AG04449 (cell line): ENCODE measurements at regions of chr12 and their contacts with region 1.

Region 1: DNA sequence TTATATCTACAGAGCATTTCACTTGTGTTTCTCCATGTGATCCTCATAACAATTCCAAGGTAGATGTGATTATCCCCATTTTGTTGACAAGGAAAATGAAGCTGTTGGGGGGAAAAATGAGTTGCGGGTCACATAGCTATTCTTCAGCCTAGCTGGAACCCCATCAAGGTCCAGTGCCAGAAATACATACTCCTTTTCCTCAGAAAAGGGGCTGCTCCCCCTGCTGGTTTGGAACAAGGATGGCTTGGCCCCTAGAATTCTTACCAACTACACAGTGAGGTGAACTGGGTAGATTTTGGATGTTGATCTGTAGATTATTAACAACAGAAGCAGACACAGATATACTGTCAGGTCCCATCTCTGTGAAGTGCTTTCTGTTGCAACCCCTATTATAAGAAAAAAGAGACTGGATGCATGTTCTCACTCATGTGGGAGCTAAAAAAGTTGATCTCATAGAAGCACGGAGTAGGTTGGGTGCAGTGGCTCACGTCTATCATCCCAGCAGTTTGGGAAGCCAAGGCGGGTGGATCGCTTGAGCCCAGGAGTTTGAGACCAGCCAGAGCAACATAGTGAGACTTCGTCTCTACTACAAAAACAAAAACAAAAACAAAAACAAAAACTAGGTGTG is 8.9 kb downstream of the IKZF4 start:
- DNase-seq: no peak
- H3K4me3 ChIP-seq: no peak overlapping the region
- CTCF ChIP-seq: peak; percentile 82

Region 2: GRCh38 chr12:55982319-55982936 is 47.4 kb before region 1 on chr12:
- CTCF ChIA-PET with region 1: interaction called, 15 read pairs
- POLR2A ChIA-PET with region 1: no interaction called
- DNase-seq: no peak
- H3K4me3 ChIP-seq: no peak overlapping the region
- CTCF ChIP-seq: no peak

Region 3: GRCh38 chr12:56007564-56008559 is 21.9 kb before region 1 on chr12:
- CTCF ChIA-PET with region 1: interaction called, 103 read pairs
- POLR2A ChIA-PET with region 1: no interaction called
- DNase-seq: no peak
- H3K4me3 ChIP-seq: peak overlapping the region; percentile 69
- CTCF ChIP-seq: no peak

Region 4: DNA sequence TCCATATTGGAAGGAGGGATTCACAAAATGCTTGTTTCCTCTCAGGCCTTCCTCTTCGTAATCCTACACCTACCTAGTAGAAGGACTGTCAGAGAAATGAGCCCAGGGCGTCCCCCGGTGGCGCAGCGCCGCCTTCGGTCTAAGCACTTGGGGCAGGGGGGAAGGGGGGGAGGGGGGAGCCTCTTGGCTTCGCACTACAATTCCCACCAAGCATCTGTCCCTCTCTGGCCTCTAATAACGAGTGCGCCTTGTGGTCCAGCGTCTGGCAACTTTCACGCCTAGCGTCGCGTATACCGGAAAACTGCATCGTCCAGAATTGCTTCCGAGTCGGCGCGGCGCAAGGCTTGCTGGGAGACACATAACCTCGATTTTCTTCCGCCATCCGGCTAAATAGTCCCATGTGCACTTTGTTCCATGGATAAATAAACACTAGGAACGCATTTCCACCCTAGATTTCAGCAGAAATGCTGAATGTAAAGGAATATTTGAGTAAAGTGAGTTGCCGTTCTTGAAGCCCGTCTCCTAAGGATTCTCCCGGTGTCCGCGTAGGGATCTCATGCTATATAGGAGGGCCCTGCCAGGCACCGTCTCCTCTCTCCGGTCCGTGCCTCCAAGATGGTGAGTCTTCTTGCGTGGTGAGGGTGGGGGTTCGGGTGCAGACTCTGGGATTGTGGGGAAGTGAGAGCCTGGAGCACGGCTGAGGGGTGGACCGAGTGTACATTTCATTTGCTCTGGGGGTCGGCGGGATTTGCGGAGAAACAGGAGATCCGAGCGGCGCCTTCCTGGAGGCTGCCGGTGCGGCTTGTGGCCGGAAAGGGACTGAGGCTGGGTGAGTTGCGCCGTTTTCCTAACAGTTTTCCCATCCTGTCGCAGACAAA is 12.0 kb after region 1 on chr12 and contains the start of gene RPS26:
- CTCF ChIA-PET with region 1: interaction called, 69 read pairs
- POLR2A ChIA-PET with region 1: interaction called, 4 read pairs
- DNase-seq: peak; percentile 96
- H3K4me3 ChIP-seq: peak within 1 kb of the TSS; percentile 95
- CTCF ChIP-seq: peak; percentile 64

Region 5: DNA sequence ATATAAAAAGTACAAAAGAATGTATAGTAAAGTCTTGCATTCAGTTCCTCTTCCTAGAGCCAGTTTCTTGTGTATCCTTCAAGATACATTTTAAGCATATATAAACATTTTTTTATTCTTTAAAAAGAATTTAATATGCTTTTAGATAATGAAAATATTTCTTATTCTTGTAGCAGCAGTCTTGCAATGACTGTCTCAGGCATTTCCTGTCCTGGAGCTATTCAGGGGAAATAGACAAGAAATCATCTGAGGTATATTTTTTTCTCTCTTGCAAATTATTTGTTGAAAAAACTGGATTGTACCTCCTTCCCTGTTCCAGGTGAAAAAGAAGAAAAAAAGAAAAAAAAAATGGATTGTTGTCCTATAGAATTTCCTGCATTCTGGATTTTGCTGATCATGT is 33.2 kb after region 1 on chr12:
- CTCF ChIA-PET with region 1: interaction called, 10 read pairs
- POLR2A ChIA-PET with region 1: no interaction called
- DNase-seq: no peak
- H3K4me3 ChIP-seq: no peak overlapping the region
- CTCF ChIP-seq: no peak